Dendritic cell treated with granulocyte-macrophage colony-stimulating factor and Interleukin-4, amounts not matched to agents 40 ng/mL and 50 ng/mL, for 4 days (primary cell): ENCODE measurements at regions of chr18 and their contacts with region 1.

Region 1: DNA sequence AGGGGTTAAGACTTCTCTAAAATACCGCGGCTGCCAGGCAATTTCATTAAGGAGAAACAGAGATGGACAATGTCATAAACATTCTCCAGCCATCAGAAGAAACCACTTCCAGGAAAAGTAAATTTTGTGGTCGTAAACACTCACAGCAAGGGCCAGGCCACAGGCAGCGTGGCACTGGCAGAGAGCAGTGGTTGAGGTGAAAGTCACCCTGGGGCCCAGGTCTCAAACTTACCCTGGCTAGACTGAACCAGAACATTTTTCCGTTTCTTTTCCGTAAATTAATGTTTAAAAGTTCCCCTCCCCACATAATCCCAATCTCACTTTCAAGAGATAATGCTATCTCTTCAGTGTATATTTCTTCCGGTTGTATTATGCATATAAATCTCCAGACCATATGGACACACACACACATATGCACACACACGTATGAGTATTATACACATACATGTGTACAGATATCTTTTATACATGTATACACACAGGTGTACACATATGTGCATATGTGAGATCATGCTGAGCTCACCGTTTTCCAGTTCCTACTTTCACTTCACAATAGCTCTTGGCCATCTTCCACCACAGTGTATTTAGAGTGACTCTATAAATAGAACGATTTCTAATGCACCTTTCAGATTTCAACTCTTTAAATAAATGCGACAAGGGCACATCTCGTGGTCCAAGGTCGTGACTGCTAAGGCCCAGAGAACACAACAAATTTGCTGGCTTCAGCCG is 90.1 kb downstream of the MALT1 start:
- H3K4me3 Mint-ChIP-seq: no peak overlapping the region
- H3K27ac Mint-ChIP-seq: no peak overlapping the region
- H3K4me1 Mint-ChIP-seq: peaks cover 15% of the 10 kb centered on the region
- H3K27me3 Mint-ChIP-seq: peaks cover 50% of the 10 kb centered on the region

Region 2: DNA sequence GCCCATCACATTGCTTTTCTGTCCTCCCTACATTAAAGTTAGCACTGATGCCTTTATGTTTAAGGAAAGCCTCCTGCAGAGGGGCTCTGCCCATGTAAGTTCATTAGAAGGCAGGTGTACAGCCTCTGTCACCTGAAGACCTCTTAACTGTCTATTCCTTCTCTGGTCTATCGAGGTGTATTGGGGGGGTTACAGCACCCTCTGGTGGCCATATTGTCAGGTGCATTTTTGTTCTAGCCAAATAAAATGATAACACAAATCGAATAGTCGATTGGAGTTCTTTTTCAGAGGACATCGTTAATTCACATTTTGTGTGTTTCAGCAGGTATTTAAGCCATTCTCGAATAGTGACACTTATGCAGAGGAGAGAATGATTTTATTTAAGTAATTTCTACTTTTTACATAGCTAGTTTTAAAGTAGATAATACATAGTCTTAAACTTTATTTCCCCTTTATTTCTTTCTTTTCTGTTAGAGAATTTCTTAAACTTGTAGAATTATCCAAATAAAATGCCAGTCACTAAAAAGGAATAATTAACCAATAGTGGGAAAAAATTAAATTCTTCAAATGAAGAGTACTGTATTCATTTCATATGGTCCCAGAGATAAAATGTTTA is 580.6 kb before region 1 on chr18:
- intact Hi-C with region 1: loop called (anchors 5 kb)
- H3K4me3 Mint-ChIP-seq: no peak overlapping the region
- H3K27ac Mint-ChIP-seq: no peak overlapping the region
- H3K4me1 Mint-ChIP-seq: no peaks in the 10 kb centered on the region
- H3K27me3 Mint-ChIP-seq: peaks cover 12% of the 10 kb centered on the region

Region 3: GRCh38 chr18:58781627-58782194 is 20.3 kb after region 1 on chr18:
- intact Hi-C with region 1: no loop called
- H3K4me3 Mint-ChIP-seq: no peak overlapping the region
- H3K27ac Mint-ChIP-seq: no peak overlapping the region
- H3K4me1 Mint-ChIP-seq: peaks cover 5% of the 10 kb centered on the region
- H3K27me3 Mint-ChIP-seq: peaks cover 8% of the 10 kb centered on the region